Adrenal gland (tissue), 19 donors: ENCODE measurements at regions of chr5 and their contacts with region 1.

Region 1: GRCh38 chr5:11268891-11269290 is 507.9 kb upstream of the DAP start:
- DNase-seq: no peak
- H3K4me3 ChIP-seq: no peak overlapping the region
- H3K27ac ChIP-seq: no peak overlapping the region
- H3K4me1 ChIP-seq: no peaks in the 10 kb centered on the region
- H3K27me3 ChIP-seq: no peaks in the 10 kb centered on the region
- CTCF ChIP-seq: no peak
- POLR2A ChIP-seq: no peak

Region 2: GRCh38 chr5:11494340-11494739 is 225.4 kb after region 1 on chr5:
- intact Hi-C with region 1: loop called (anchors 10 kb)
- DNase-seq: no peak
- H3K4me3 ChIP-seq: no peak overlapping the region
- H3K27ac ChIP-seq: no peak overlapping the region
- H3K4me1 ChIP-seq: no peaks in the 10 kb centered on the region
- H3K27me3 ChIP-seq: no peaks in the 10 kb centered on the region
- CTCF ChIP-seq: peak in 5 of 6 experiments; percentile 16 to 53 (median 26)
- POLR2A ChIP-seq: no peak

Region 3: DNA sequence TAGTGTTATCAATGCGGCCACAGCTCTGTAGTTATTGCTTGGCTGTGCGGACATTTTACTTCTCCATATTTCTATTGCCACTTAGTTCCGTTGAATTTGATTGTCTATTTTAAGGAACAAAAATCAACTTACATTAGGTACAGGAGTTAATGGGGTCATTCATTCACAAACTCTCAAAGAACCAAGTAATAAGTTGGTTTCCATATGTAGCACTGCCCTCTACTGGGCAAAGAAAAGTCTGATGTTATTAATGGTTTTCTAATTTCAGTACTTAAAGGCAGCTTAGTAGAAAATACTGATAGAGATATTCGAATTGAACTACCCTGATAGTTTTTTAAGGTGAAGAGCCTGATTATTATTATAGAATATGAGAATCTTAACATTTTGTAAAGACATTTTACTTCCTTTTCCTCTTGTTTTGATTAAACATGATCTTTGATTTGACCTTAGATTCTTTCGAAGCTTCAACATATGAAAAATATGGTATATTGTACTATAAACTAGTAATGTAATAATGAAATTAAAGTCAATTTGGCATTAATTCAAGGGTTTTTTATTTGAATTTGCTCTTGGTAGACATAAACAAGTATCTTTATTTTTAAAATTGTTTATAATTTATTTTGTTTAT is 754.8 kb after region 1 on chr5:
- intact Hi-C with region 1: no loop called
- DNase-seq: no peak
- H3K4me3 ChIP-seq: no peak overlapping the region
- H3K27ac ChIP-seq: no peak overlapping the region
- H3K4me1 ChIP-seq: no peaks in the 10 kb centered on the region
- H3K27me3 ChIP-seq: no peaks in the 10 kb centered on the region
- CTCF ChIP-seq: peak; percentile 7 to 61 (median 34)
- POLR2A ChIP-seq: no peak